ENCODE measurements at regions of chr12 and their contacts with region 1.

Region 1: DNA sequence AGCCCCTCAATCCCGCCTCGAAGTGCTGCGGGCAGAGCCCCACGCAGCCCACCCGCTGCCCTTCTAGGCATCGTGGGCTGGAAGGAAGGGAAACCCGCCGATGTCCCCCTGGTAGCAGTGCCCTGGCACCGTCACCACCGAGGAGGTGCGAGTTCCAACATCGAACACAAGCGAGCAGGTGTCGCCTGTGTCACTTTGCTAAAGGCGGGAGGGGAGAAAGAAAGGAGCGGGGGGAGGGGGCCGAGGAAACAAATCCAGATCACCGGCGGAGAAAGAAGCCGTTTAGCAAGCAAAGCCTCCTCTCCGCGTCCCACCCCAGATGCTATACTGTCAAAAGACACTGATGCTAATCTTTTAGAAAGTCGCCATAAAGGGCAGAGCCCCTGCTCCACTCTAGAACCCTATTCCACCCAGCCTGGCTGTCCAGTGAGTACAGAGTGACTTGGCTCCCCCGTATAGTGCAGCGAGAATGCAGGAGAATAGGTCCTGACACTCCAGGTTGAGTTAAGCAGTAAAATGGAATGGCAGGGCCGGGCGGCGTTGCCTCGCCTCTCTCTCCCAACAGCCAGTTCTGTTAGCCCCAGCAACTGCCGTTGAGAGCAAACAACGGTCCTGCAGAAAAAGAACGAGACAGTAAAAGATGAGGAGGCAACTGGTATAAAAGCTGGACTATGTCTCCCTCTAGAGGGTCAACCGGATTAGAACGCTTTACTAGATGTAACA is 67.9 kb upstream of the USP15 start:
- DNase-seq: peak; percentile 50
- H3K4me3 Mint-ChIP-seq: peak overlapping the region; percentile 80
- H3K27ac Mint-ChIP-seq: no peak overlapping the region
- H3K4me1 Mint-ChIP-seq: peaks cover 23% of the 10 kb centered on the region
- H3K27me3 Mint-ChIP-seq: peaks cover 62% of the 10 kb centered on the region

Region 2: DNA sequence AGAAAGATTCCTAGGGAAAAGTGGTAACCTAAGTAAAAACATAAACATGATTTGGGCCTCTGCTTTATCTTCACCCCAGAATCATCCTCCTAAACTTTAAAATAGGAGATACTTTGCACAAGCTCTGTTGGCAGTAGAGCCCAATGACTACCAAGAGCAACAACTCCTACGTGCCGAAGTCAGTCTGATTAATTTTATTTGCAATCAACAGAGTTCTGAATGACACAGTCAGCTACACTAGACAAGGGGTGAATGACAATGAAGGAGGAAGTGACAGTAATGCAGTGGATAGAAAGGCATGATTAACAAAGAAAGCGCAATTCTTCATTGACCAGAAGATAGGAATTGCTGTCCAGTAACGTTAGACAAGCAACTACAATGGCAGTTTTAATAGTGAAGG is 890.1 kb before region 1 on chr12:
- intact Hi-C with region 1: no loop called
- DNase-seq: no peak
- H3K4me3 Mint-ChIP-seq: no peak overlapping the region
- H3K27ac Mint-ChIP-seq: no peak overlapping the region
- H3K4me1 Mint-ChIP-seq: no peaks in the 10 kb centered on the region
- H3K27me3 Mint-ChIP-seq: no peaks in the 10 kb centered on the region

Region 3: DNA sequence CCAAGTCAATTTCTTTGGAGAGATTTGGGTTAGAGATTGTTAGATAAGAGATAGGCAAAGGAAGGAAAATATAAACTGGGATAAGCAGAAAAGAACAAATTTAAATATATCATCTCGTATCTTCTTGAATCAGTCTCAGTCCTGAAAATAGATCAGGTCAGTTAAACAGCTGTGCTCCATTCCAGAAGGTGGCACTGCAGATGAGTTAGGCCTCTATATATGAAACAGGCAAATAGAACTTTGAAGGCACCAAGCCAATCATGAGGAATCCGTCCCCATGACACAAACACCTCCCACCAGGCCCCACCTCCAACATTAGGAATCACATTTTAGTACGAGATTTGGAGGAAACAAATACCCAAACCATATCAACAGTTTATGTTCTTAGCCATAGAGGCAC is 537.6 kb before region 1 on chr12:
- intact Hi-C with region 1: loop called (anchors 2 kb)
- DNase-seq: no peak
- H3K4me3 Mint-ChIP-seq: no peak overlapping the region
- H3K27ac Mint-ChIP-seq: no peak overlapping the region
- H3K4me1 Mint-ChIP-seq: no peaks in the 10 kb centered on the region
- H3K27me3 Mint-ChIP-seq: no peaks in the 10 kb centered on the region

Region 4: GRCh38 chr12:61870658-61871484 is 321.5 kb before region 1 on chr12:
- intact Hi-C with region 1: no loop called
- DNase-seq: no peak
- H3K4me3 Mint-ChIP-seq: peak overlapping the region; percentile 12
- H3K27ac Mint-ChIP-seq: peak overlapping the region; percentile 62
- H3K4me1 Mint-ChIP-seq: no peaks in the 10 kb centered on the region
- H3K27me3 Mint-ChIP-seq: peaks cover 2% of the 10 kb centered on the region

Region 5: DNA sequence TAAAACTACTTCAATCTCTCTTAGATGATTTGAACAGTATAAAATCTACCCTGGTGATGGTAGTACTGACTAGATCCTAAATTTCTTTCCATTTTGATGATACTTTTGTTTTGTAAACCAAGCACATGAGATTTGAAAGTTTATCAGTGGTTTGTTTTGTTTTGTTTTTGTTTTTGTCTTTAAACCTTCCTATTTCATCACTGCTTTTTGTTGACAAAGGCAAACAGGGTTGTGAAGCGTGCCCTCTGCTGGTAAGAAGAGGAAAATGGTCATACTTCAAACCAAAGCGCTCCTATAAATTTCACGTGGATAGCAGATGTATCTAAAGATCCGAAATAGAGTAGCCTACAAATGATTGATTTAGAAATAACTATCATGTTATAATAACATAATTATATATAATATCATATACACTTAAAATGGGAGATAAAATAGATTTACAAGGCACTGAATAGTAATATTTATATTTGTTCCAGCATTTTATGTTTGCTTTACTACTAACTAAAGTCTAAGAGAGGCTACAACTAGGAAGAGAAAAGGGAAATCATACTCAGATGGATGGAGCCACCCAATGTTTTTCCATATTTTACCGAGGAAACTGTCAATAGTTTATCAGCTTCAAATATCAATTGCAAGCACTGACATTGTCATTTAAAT is 186.1 kb before region 1 on chr12:
- intact Hi-C with region 1: loop called (anchors 1 kb)
- DNase-seq: no peak
- H3K4me3 Mint-ChIP-seq: no peak overlapping the region
- H3K27ac Mint-ChIP-seq: no peak overlapping the region
- H3K4me1 Mint-ChIP-seq: no peaks in the 10 kb centered on the region
- H3K27me3 Mint-ChIP-seq: no peaks in the 10 kb centered on the region

Region 6: DNA sequence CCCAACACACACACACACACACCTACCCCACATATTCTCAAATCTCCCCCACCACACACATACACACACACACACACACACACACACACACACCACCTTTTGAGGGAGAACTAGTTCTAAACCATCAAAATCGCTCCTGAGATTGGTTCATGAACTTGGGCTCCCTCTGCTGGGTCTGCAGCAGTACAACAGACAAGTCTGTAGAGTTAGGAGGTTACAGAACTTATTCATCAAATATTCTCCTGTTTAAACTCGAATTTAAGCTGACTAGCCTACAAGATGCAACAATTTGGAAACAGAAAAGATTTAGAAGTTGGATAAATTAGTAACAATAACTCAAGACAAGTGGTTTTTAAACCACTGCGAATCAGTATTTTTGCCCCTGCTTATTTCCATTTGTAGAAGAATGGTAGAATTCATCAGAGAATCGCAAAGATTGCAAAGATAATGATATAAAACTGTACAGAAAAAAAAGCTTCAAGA is 68.6 kb before region 1 on chr12:
- intact Hi-C with region 1: loop called (anchors 1 kb)
- DNase-seq: no peak
- H3K4me3 Mint-ChIP-seq: no peak overlapping the region
- H3K27ac Mint-ChIP-seq: no peak overlapping the region
- H3K4me1 Mint-ChIP-seq: no peaks in the 10 kb centered on the region
- H3K27me3 Mint-ChIP-seq: peaks cover 8% of the 10 kb centered on the region

Region 7: GRCh38 chr12:62247281-62248045 is 55.1 kb after region 1 on chr12:
- intact Hi-C with region 1: no loop called
- DNase-seq: no peak
- H3K4me3 Mint-ChIP-seq: no peak overlapping the region
- H3K27ac Mint-ChIP-seq: no peak overlapping the region
- H3K4me1 Mint-ChIP-seq: peaks cover 32% of the 10 kb centered on the region
- H3K27me3 Mint-ChIP-seq: no peaks in the 10 kb centered on the region

Region 8: GRCh38 chr12:62438098-62438692 is 245.9 kb after region 1 on chr12:
- intact Hi-C with region 1: no loop called
- DNase-seq: peak; percentile 28
- H3K4me3 Mint-ChIP-seq: no peak overlapping the region
- H3K27ac Mint-ChIP-seq: no peak overlapping the region
- H3K4me1 Mint-ChIP-seq: peaks cover 24% of the 10 kb centered on the region
- H3K27me3 Mint-ChIP-seq: peaks cover 48% of the 10 kb centered on the region

Measured in activated T-helper 1 cell treated with anti-CD3 and anti-CD28 coated beads, Interleukin-12 subunit alpha, Interleukin-12 subunit beta, Interleukin-2, Interleukin-4 antibody, amounts not matched to agents 30 ng/mL and 10 ng/mL and 1 ng/mL, durations not matched to agents 14 hours and 24 hours and 36 hours (primary cell).